ENCODE measurements at regions of chr7 and their contacts with region 1.

Region 1: DNA sequence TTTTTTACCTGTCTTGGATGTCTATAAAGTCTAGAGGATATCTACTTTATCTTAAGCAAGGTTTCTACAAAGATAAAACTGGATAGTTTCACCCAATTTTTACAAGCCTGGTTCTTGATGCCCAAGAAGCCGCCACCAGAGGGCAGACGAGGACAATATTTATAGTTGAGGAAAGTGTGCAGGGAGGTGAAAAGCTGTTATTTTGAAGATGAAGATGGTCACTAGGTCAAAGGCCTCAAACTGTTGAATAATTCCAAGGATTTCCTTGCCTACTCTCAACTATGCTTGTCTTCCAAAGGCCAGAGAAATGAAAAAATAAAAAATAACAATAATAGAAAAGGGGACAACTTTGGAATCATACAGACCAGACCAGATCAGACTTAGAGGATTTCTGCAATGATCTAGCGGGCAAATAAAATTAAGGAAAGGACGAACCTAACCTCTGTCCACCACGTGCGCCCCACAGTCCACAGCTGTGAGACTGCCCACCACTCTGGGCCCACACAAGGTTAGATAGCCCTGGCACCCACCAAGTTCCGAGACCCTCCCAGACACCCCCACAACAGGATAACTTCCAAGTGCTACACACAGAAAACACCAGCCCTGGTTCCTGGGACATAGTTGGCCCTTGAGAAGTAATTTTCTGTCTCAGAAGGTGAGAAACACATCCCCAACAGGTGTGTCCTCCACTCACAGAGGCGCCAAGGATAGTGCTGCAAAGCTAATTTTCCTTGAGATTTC is 2.8 kb downstream of the PKD1L1 start:
- DNase-seq: no peak
- ATAC-seq: peak; percentile 88
- H3K4me3 ChIP-seq: no peak overlapping the region
- H3K27ac ChIP-seq: no peak overlapping the region
- H3K4me1 ChIP-seq: no peaks in the 10 kb centered on the region
- H3K27me3 ChIP-seq: no peaks in the 10 kb centered on the region; a peak in 1 of 4 replicates
- CTCF ChIP-seq: peak; percentile 66 to 80 (median 78)
- EP300 ChIP-seq: no peak
- POLR2A ChIP-seq: no peak
- RAD21 ChIP-seq: peak; percentile 93

Region 2: DNA sequence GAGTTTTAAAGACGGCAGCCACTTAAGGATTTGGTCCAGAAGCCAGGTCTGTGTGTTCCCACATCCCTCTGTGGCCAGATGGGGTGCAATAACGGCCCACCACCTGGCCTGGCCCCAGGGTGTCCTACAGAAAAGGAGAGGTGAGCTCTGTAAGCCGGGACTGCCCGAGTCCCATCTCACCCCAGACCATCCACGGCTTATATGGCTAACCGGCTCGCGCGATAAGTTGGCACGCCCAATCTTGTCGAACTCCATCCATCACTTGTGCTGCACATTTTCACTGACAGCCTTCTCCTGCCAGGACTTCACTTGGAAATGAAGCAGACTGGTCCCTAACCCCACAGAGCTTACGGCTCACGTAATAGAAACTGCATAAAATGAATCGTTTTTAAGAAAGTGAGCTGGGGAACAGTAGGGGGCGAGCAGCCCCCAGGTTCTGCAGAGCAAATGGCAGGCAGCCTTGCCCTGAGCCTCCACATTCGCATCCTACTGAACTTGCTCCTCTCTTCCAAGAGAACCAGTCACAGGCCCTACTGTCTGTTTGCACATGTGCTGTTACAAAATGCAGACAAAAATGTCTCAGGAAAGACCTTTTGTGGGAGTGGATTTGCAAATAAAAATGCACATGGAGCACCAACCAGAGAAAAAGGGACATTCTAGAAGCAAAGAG is 461.7 kb before region 1 on chr7:
- CTCF ChIA-PET with region 1: no interaction called
- POLR2A ChIA-PET with region 1: no interaction called
- RAD21 ChIA-PET with region 1: no interaction called
- SMC1A ChIA-PET with region 1: no interaction called
- in situ Hi-C with region 1: no loop called
- intact Hi-C with region 1: no loop called
- DNase-seq: no peak
- ATAC-seq: no peak
- H3K4me3 ChIP-seq: no peak overlapping the region
- H3K27ac ChIP-seq: no peak overlapping the region
- H3K4me1 ChIP-seq: peaks cover 28% of the 10 kb centered on the region
- H3K27me3 ChIP-seq: no peaks in the 10 kb centered on the region
- CTCF ChIP-seq: peak in 1 of 3 experiments; percentile 6; a peak in 1 of 6 replicates
- EP300 ChIP-seq: no peak
- POLR2A ChIP-seq: no peak
- RAD21 ChIP-seq: peak; percentile 26; the same call in 1 of the 2 replicates

Region 3: DNA sequence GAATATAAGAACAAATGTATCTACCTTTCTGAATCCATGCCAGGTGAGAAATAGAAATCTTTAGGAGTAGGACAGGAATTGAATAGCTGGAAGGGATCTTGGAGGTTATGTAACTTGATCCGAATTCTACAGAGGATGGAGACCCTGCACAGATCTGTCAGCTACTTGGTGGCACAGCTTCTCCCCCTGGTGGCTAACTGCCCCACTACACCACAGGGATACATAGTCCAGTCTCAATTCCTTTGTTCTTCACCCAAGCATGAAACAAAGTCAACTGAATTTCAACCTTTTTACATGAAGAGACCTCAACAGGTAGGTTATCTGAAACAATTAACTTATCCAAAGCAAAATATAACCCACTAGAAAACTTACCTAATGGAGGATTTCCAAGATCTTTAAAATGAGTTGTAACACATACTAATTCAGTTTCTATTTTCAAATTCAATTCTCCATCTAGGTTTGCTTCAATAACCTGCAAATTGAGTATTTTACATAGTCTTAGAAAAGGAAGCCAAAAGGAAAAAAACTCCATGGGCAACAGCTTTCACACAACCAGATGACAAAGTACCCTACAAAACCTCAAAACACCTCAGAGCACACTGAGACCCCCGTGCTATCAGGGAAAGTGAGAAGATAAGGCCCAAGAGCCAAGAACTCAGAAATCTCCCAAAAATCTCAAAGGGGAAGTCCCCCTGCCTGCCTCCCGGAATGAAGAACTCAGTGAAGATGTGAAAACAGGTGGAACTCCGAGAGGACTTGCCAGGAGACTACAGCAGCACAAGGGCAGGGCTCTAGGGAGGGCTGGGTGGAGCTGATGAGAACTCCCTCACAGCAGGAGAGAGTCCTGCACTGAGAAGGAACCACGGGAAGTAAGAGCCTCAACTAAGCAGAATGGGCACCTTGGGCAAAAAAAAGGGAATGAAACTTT is 23.7 kb after region 1 on chr7:
- CTCF ChIA-PET with region 1: interaction called, 35 read pairs
- POLR2A ChIA-PET with region 1: interaction called, 3 read pairs
- RAD21 ChIA-PET with region 1: interaction called, 6 read pairs
- SMC1A ChIA-PET with region 1: interaction called, 18 read pairs
- in situ Hi-C with region 1: no loop called
- intact Hi-C with region 1: loop called (anchors 2 kb)
- DNase-seq: no peak
- ATAC-seq: peak; percentile 93
- H3K4me3 ChIP-seq: no peak overlapping the region
- H3K27ac ChIP-seq: no peak overlapping the region
- H3K4me1 ChIP-seq: peaks cover 5% of the 10 kb centered on the region
- H3K27me3 ChIP-seq: no peaks in the 10 kb centered on the region
- CTCF ChIP-seq: peak; percentile 66 to 85 (median 78)
- EP300 ChIP-seq: no peak
- POLR2A ChIP-seq: no peak
- RAD21 ChIP-seq: peak; percentile 79

Region 4: GRCh38 chr7:47991741-47992311 is 46.4 kb after region 1 on chr7:
- CTCF ChIA-PET with region 1: interaction called, 36 read pairs
- POLR2A ChIA-PET with region 1: no interaction called
- RAD21 ChIA-PET with region 1: interaction called, 11 read pairs
- SMC1A ChIA-PET with region 1: interaction called, 8 read pairs
- in situ Hi-C with region 1: no loop called
- intact Hi-C with region 1: no loop called
- DNase-seq: peak; percentile 39
- ATAC-seq: peak; percentile 100
- H3K4me3 ChIP-seq: peak overlapping the region; percentile 67; the same call in 1 of the 2 replicates
- H3K27ac ChIP-seq: no peak overlapping the region
- H3K4me1 ChIP-seq: peaks cover 5% of the 10 kb centered on the region; the same call in 1 of the 2 replicates
- H3K27me3 ChIP-seq: no peaks in the 10 kb centered on the region
- CTCF ChIP-seq: peak; percentile 76 to 91 (median 82)
- EP300 ChIP-seq: no peak
- POLR2A ChIP-seq: peak; percentile 72
- RAD21 ChIP-seq: peak; percentile 80

Region 5: DNA sequence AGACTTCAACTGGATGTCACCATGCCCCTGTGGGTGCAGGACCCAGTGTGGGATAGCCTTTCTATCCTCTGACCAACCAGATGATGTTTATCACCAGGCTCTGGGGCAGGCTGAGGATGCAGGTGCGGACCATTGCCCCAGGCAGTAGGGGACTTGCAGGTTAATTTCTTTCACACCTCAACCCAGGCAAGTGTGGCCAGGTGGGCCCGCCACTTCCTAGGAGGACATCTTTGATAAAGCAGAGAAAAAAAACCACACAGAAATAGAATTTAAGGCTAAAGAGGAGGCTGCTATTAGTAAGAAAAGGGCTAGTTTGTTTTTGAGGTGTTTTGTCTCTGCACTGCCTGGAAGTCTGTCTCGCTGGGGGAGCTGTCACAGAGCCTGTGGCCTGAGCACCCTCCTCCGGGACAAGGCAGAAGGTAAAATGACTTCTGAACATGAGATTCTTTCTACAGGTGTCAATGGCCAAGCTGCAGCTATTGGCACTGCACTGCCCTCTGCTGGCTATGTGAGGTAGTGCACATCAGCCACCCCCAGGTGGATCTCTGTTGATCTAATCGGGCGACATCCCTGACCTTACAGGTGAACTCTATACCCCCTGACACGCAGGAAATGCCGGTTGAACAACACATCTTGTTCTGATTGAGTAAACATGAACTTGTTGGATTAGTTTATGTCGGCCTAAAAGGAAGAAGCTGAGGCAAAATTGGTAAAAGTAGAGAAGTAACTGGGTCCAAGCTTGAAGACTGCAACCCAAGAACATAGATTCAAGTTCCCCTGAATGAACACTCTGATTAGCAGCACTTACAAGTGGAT is 164.6 kb after region 1 on chr7:
- CTCF ChIA-PET with region 1: interaction called, 68 read pairs
- POLR2A ChIA-PET with region 1: no interaction called
- RAD21 ChIA-PET with region 1: interaction called, 53 read pairs
- SMC1A ChIA-PET with region 1: interaction called, 33 read pairs
- in situ Hi-C with region 1: loop called (anchors 5 kb)
- intact Hi-C with region 1: loop called (anchors 1 kb)
- DNase-seq: peak; percentile 46
- ATAC-seq: peak; percentile 97
- H3K4me3 ChIP-seq: no peak overlapping the region
- H3K27ac ChIP-seq: no peak overlapping the region
- H3K4me1 ChIP-seq: no peaks in the 10 kb centered on the region
- H3K27me3 ChIP-seq: no peaks in the 10 kb centered on the region
- CTCF ChIP-seq: peak; percentile 96 to 99 (median 98)
- EP300 ChIP-seq: no peak
- POLR2A ChIP-seq: no peak
- RAD21 ChIP-seq: peak; percentile 99

Region 6: DNA sequence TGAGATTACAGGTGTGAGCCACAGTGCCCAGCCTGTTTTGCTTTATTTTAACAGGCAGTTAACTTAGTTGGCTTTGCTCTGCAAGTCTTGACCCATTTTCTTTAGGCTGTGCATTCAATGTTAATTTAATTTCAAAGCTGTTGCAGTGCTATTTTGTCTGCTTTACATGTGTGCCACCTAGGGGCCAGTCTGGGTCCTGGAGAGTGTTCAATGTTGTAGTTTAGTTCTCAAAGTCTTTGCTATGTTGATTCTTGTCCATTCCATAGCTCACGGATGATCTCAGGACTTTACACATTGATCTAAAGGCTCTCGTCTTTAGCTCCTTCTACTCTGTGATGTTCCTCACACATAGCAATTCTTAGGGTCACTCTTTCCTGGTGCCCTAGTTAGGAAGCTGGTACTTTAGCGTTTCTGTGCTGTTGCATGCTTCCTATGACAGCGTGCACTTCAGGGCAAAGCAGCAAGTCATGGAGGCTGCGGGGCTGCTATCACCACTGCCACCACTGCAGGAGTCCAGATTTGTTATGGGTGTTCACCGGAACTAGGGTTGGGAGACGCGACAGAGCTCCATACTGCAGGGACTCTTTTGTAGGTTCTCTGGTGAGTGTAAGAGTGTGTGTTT is 209.5 kb after region 1 on chr7:
- CTCF ChIA-PET with region 1: interaction called, 26 read pairs
- POLR2A ChIA-PET with region 1: no interaction called
- RAD21 ChIA-PET with region 1: interaction called, 17 read pairs
- SMC1A ChIA-PET with region 1: interaction called, 17 read pairs
- in situ Hi-C with region 1: no loop called
- intact Hi-C with region 1: loop called (anchors 1 kb)
- DNase-seq: no peak
- ATAC-seq: peak; percentile 87
- H3K4me3 ChIP-seq: no peak overlapping the region
- H3K27ac ChIP-seq: no peak overlapping the region
- H3K4me1 ChIP-seq: no peaks in the 10 kb centered on the region
- H3K27me3 ChIP-seq: no peaks in the 10 kb centered on the region; a peak in 2 of 4 replicates
- CTCF ChIP-seq: peak; percentile 56 to 63 (median 61); a peak in 5 of 6 replicates
- EP300 ChIP-seq: no peak
- POLR2A ChIP-seq: no peak
- RAD21 ChIP-seq: peak; percentile 75

Measured in GM12878 (cell line).